ENCODE measurements at regions of chr1 and their contacts with region 1.

Region 1: GRCh38 chr1:168637350-168637991 is 61.1 kb downstream of the XCL1 start:
- DNase-seq: no peak
- H3K4me3 ChIP-seq: no peak overlapping the region
- H3K27ac ChIP-seq: no peak overlapping the region
- H3K4me1 ChIP-seq: no peaks in the 10 kb centered on the region
- H3K27me3 ChIP-seq: no peaks in the 10 kb centered on the region
- CTCF ChIP-seq: peak in 2 of 3 experiments; percentile 60 to 94; a peak in 3 of 4 replicates
- EP300 ChIP-seq: no peak
- POLR2A ChIP-seq: no peak
- RAD21 ChIP-seq: peak; percentile 75 to 80

Region 2: GRCh38 chr1:168623003-168623828 is 14.3 kb before region 1 on chr1:
- CTCF ChIA-PET with region 1: interaction called, 15 read pairs
- POLR2A ChIA-PET with region 1: no interaction called
- DNase-seq: no peak
- H3K4me3 ChIP-seq: no peak overlapping the region
- H3K27ac ChIP-seq: no peak overlapping the region
- H3K4me1 ChIP-seq: no peaks in the 10 kb centered on the region
- H3K27me3 ChIP-seq: no peaks in the 10 kb centered on the region; a peak in 1 of 7 replicates
- CTCF ChIP-seq: no peak
- EP300 ChIP-seq: no peak
- POLR2A ChIP-seq: no peak
- RAD21 ChIP-seq: no peak

Region 3: DNA sequence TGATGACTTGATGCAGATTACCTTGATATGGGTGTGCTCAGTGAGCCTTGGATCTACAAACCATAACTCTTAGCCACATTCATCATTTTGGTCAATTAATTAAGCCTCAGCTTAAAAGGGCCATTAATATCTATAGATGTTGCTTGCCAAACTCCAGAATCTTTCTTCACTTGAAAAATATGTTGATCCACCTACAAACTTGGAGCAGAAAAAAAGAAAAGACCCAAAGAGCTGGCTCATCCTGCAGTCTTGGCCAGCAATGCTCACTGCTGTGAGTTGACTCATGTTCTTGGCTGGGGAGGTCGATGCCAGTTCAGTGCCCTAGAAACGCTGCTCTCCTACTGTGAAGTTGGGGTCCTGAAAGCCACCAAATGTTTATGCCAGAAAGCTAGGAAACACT is 16.1 kb after region 1 on chr1:
- CTCF ChIA-PET with region 1: interaction called, 18 read pairs
- POLR2A ChIA-PET with region 1: no interaction called
- DNase-seq: no peak
- H3K4me3 ChIP-seq: no peak overlapping the region
- H3K27ac ChIP-seq: no peak overlapping the region
- H3K4me1 ChIP-seq: peaks cover 0 to 3% (median 0%) of the 10 kb centered on the region in 4 experiments; a peak in 1 of 7 replicates
- H3K27me3 ChIP-seq: no peaks in the 10 kb centered on the region
- CTCF ChIP-seq: no peak
- EP300 ChIP-seq: no peak
- POLR2A ChIP-seq: no peak
- RAD21 ChIP-seq: no peak